ENCODE measurements at regions of chr5 and their contacts with region 1.

Region 1: GRCh38 chr5:150458819-150459557 is 9.4 kb upstream of the RPS14 start:
- DNase-seq: peak; percentile 88 to 93 (median 89)
- ATAC-seq: peak; percentile 98
- H3K4me3 ChIP-seq: no peak overlapping the region
- H3K4me1 ChIP-seq: no peaks in the 10 kb centered on the region
- CTCF ChIP-seq: peak; percentile 85

Region 2: GRCh38 chr5:150523472-150524350 is 64.7 kb after region 1 on chr5:
- intact Hi-C with region 1: loop called (anchors 5 to 10 kb)
- DNase-seq: peak in 1 of 3 donors; percentile 64
- ATAC-seq: peak; percentile 67
- H3K4me3 ChIP-seq: no peak overlapping the region
- H3K4me1 ChIP-seq: peaks cover 23% of the 10 kb centered on the region
- CTCF ChIP-seq: no peak

Region 3: GRCh38 chr5:150542933-150543445 is 84.0 kb after region 1 on chr5:
- intact Hi-C with region 1: loop called in 1 of 2 experiments (anchors 2 kb)
- DNase-seq: peak; percentile 77 to 93 (median 80)
- ATAC-seq: peak; percentile 86
- H3K4me3 ChIP-seq: no peak overlapping the region
- H3K4me1 ChIP-seq: peaks cover 26% of the 10 kb centered on the region
- CTCF ChIP-seq: no peak